ENCODE measurements at regions of chr1 and their contacts with region 1.

Region 1: GRCh38 chr1:43348809-43349583 is 9.8 kb upstream of the CDC20 start:
- DNase-seq: peak; percentile 85
- ATAC-seq: peak; percentile 86
- H3K4me3 ChIP-seq: peak overlapping the region; percentile 72 to 88 (median 86)
- H3K27ac ChIP-seq: peak overlapping the region; percentile 98
- H3K4me1 ChIP-seq: peaks cover 62% of the 10 kb centered on the region
- H3K27me3 ChIP-seq: no peaks in the 10 kb centered on the region; a peak in 1 of 5 replicates
- CTCF ChIP-seq: peak; percentile 28; the same call in 1 of the 2 replicates
- EP300 ChIP-seq: 0 out of 4 replicates have a peak, but pooled peaks of 1 of the 2 experiments have one; percentile 5
- POLR2A ChIP-seq: peak; percentile 76 to 88
- RAD21 ChIP-seq: peak; percentile 17; the same call in 1 of the 2 replicates

Region 2: GRCh38 chr1:43238085-43238484 is 110.9 kb before region 1 on chr1:
- CTCF ChIA-PET with region 1: no interaction called
- POLR2A ChIA-PET with region 1: no interaction called
- in situ Hi-C with region 1: no loop called
- intact Hi-C with region 1: loop called (anchors 5 kb)
- DNase-seq: peak; percentile 81
- ATAC-seq: peak; percentile 95
- H3K4me3 ChIP-seq: no peak overlapping the region
- H3K27ac ChIP-seq: no peak overlapping the region
- H3K4me1 ChIP-seq: peaks cover 6% of the 10 kb centered on the region; the same call in 1 of the 2 replicates
- H3K27me3 ChIP-seq: peaks cover 1 to 27% of the 10 kb centered on the region in 2 experiments; a peak in 4 of 5 replicates
- CTCF ChIP-seq: peak; percentile 97
- EP300 ChIP-seq: no peak
- POLR2A ChIP-seq: no peak
- RAD21 ChIP-seq: peak; percentile 96

Region 3: GRCh38 chr1:43276673-43277072 is 72.3 kb before region 1 on chr1:
- CTCF ChIA-PET with region 1: no interaction called
- POLR2A ChIA-PET with region 1: interaction called, 13 read pairs
- in situ Hi-C with region 1: no loop called
- intact Hi-C with region 1: no loop called
- DNase-seq: peak; percentile 87
- ATAC-seq: peak; percentile 75
- H3K4me3 ChIP-seq: peak overlapping the region; percentile 17 to 55 (median 30); a peak in 5 of 6 replicates
- H3K27ac ChIP-seq: peak overlapping the region; percentile 53
- H3K4me1 ChIP-seq: peaks cover 76% of the 10 kb centered on the region
- H3K27me3 ChIP-seq: no peaks in the 10 kb centered on the region; a peak in 1 of 5 replicates
- CTCF ChIP-seq: no peak
- EP300 ChIP-seq: peak; percentile 73 to 74; a peak in 3 of 4 replicates
- POLR2A ChIP-seq: no peak
- RAD21 ChIP-seq: no peak

Region 4: GRCh38 chr1:43358746-43359693 is 10.0 kb after region 1 on chr1 and contains the start of gene CDC20:
- CTCF ChIA-PET with region 1: no interaction called
- POLR2A ChIA-PET with region 1: interaction called, 29 read pairs
- in situ Hi-C with region 1: no loop called
- intact Hi-C with region 1: no loop called
- DNase-seq: peak; percentile 97
- ATAC-seq: peak; percentile 96
- H3K4me3 ChIP-seq: peak within 1 kb of the TSS; percentile 92 to 97 (median 97)
- H3K27ac ChIP-seq: peak within 1 kb of the TSS; percentile 76
- H3K4me1 ChIP-seq: peaks cover 63% of the 10 kb centered on the region
- H3K27me3 ChIP-seq: no peaks in the 10 kb centered on the region; a peak in 1 of 5 replicates
- CTCF ChIP-seq: no peak
- EP300 ChIP-seq: no peak
- POLR2A ChIP-seq: peak; percentile 82 to 87
- RAD21 ChIP-seq: no peak
- total RNA-seq, gene CDC20: 90.0 and 97.8 TPM in 2 replicates

Region 5: GRCh38 chr1:43367904-43368645 is 19.1 kb after region 1 on chr1 and contains the start of gene ELOVL1:
- CTCF ChIA-PET with region 1: no interaction called
- POLR2A ChIA-PET with region 1: interaction called, 32 read pairs
- in situ Hi-C with region 1: no loop called
- intact Hi-C with region 1: no loop called
- DNase-seq: peak; percentile 75
- ATAC-seq: peak; percentile 89
- H3K4me3 ChIP-seq: peak within 1 kb of the TSS; percentile 76 to 88 (median 79)
- H3K27ac ChIP-seq: peak within 1 kb of the TSS; percentile 91
- H3K4me1 ChIP-seq: peaks cover 52% of the 10 kb centered on the region
- H3K27me3 ChIP-seq: no peaks in the 10 kb centered on the region
- CTCF ChIP-seq: peak; percentile 71
- EP300 ChIP-seq: no peak
- POLR2A ChIP-seq: peak; percentile 75 to 96
- RAD21 ChIP-seq: peak; percentile 60
- total RNA-seq, gene ELOVL1: 29.7 and 55.2 TPM in 2 replicates